AG04449 (cell line): ENCODE measurements at regions of chr19 and their contacts with region 1.

Region 1: GRCh38 chr19:12139885-12140547 is at the start of gene ZNF20:
- DNase-seq: peak; percentile 44
- H3K4me3 ChIP-seq: peak within 1 kb of the TSS; percentile 86
- CTCF ChIP-seq: no peak

Region 2: GRCh38 chr19:11887611-11888531 is 252.1 kb before region 1 on chr19 and contains the start of gene ZNF69:
- CTCF ChIA-PET with region 1: interaction called, 12 read pairs
- POLR2A ChIA-PET with region 1: no interaction called
- DNase-seq: no peak
- H3K4me3 ChIP-seq: peak within 1 kb of the TSS; percentile 86
- CTCF ChIP-seq: peak; percentile 38

Region 3: GRCh38 chr19:12035220-12036153 is 104.5 kb before region 1 on chr19 and contains the start of gene ZNF433:
- CTCF ChIA-PET with region 1: interaction called, 10 read pairs
- POLR2A ChIA-PET with region 1: interaction called, 5 read pairs
- DNase-seq: peak; percentile 19
- H3K4me3 ChIP-seq: peak within 1 kb of the TSS; percentile 96
- CTCF ChIP-seq: no peak

Region 4: DNA sequence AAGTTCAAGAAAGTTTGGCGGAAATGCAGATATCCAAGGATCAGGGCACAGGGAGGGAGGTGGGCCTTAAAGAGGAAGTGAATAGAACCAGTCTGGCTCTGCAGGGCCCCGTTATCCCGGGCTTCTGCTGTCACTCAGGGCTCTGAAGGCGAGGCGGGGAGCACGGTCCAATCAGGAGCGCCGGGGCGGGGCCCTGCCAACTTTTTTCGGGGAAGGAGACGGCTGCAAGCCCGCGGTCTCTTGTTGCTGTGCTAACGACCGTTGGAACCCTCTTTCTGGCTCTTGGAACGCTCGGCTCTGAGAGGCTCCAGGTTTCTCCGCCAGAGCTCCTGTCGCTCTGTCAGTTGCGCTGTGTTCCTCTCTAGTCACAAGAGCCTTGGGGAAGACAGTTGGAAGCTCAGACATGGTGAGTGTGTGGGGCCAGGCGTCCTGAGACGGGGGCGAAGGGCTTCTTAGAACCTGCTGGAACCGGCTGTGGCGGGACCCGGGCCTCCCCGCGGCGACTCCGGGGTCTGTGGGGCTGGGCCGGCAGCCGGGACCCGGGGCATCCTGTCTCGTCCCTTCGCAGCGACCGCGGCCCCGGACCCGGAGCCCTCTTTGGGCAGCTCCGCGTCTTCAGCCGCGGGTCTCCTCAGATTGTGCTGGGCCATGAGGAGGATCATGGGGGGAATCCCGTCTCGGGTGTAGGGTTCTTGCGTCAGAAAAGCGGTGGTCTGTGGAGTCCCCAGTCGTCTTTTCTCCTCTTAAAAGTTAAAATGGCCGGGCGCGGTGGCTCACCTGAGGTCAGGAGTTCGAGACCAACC is 47.8 kb before region 1 on chr19:
- CTCF ChIA-PET with region 1: interaction called, 45 read pairs
- POLR2A ChIA-PET with region 1: no interaction called
- DNase-seq: peak; percentile 37
- H3K4me3 ChIP-seq: peak overlapping the region; percentile 78
- CTCF ChIP-seq: no peak

Region 5: DNA sequence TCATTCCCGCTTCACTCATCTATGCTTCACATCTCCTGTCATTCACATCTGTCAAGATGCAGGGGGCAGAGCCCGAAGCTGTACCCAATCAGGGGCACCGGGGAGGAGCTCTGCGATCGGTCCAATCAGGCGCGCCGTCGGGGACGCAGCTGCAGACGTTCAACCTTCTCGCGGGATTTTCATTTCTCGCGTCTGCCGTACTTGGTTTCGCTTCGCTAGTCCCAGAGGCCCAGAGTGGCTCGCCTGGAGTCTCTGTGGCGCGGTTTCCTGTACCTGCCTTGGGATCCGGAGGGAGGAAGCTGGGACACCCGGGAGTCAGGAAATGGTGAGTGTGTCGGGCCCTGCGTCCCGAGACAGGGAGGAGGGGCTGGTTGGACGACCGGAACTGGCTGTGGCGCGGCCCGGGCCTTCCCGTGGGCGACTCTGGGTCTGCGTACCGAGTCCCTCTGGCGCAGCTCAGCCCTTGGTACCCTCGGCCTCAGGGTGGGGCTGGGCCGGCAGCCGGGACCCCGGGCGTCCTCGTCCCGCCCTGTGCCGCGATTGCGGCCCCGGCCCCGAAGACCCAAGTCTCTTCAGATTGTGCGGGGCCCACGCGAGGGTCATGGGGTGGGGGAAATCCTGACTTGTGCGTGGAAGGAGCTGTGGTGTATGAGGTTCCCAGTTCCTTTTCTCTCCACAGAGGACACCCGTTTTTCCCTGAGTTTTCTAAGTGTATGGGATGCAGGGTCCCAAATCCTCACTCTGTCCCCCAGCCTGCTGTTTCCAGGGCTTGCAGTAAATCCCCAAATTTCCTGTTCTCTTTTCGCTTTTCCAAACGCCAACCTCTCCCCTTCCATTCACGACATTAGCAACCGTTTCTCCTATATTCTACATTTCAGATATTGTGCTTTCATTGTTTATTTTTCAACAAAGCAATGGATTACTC is 23.1 kb after region 1 on chr19 and contains the start of gene ZNF136:
- CTCF ChIA-PET with region 1: interaction called, 15 read pairs
- POLR2A ChIA-PET with region 1: interaction called, 6 read pairs
- DNase-seq: peak; percentile 67
- H3K4me3 ChIP-seq: peak within 1 kb of the TSS; percentile 92
- CTCF ChIP-seq: no peak